ENCODE measurements at regions of chr17 and their contacts with region 1.

Region 1: GRCh38 chr17:52827526-52827925 is 669.0 kb upstream of the CA10 start:
- DNase-seq: no peak
- ATAC-seq: no peak
- H3K4me3 Mint-ChIP-seq: no peak overlapping the region
- H3K27ac Mint-ChIP-seq: no peak overlapping the region
- H3K4me1 Mint-ChIP-seq: no peaks in the 10 kb centered on the region
- H3K27me3 Mint-ChIP-seq: no peaks in the 10 kb centered on the region

Region 2: GRCh38 chr17:52482271-52482670 is 345.3 kb before region 1 on chr17:
- CTCF ChIA-PET with region 1: no interaction called
- POLR2A ChIA-PET with region 1: no interaction called
- intact Hi-C with region 1: no loop called
- DNase-seq: no peak
- ATAC-seq: no peak
- H3K4me3 Mint-ChIP-seq: no peak overlapping the region
- H3K27ac Mint-ChIP-seq: no peak overlapping the region
- H3K4me1 Mint-ChIP-seq: no peaks in the 10 kb centered on the region
- H3K27me3 Mint-ChIP-seq: no peaks in the 10 kb centered on the region

Region 3: GRCh38 chr17:52776234-52776633 is 51.3 kb before region 1 on chr17:
- CTCF ChIA-PET with region 1: no interaction called
- POLR2A ChIA-PET with region 1: no interaction called
- intact Hi-C with region 1: loop called in 1 of 2 experiments (anchors 5 kb)
- DNase-seq: no peak
- ATAC-seq: no peak
- H3K4me3 Mint-ChIP-seq: no peak overlapping the region
- H3K27ac Mint-ChIP-seq: no peak overlapping the region
- H3K4me1 Mint-ChIP-seq: no peaks in the 10 kb centered on the region
- H3K27me3 Mint-ChIP-seq: no peaks in the 10 kb centered on the region

Region 4: DNA sequence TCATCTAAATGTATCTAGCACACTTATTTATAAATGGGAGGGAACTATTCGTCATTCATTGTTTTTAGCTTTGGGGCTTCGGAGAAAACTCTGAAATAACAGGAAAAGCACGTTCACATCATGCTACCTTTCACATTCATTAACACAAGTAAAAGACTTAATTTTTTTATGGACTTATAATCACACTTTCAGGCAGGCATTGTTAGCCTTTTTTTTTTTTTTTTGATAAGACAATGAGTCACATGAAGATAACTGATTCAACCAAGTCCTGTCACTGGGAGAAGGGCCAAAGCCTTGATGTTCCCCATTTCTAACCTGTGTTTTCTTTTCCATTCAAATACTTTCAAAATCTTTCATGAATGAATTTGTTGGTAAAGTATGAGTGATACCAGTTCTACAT is 37.7 kb before region 1 on chr17:
- CTCF ChIA-PET with region 1: interaction called, 3 read pairs
- POLR2A ChIA-PET with region 1: no interaction called
- intact Hi-C with region 1: loop called in 1 of 2 experiments (anchors 5 kb)
- DNase-seq: no peak
- ATAC-seq: no peak
- H3K4me3 Mint-ChIP-seq: no peak overlapping the region
- H3K27ac Mint-ChIP-seq: no peak overlapping the region
- H3K4me1 Mint-ChIP-seq: no peaks in the 10 kb centered on the region
- H3K27me3 Mint-ChIP-seq: no peaks in the 10 kb centered on the region

Region 5: GRCh38 chr17:52885882-52886281 is 58.4 kb after region 1 on chr17:
- CTCF ChIA-PET with region 1: no interaction called
- POLR2A ChIA-PET with region 1: no interaction called
- intact Hi-C with region 1: no loop called
- DNase-seq: no peak
- ATAC-seq: no peak
- H3K4me3 Mint-ChIP-seq: no peak overlapping the region
- H3K27ac Mint-ChIP-seq: no peak overlapping the region
- H3K4me1 Mint-ChIP-seq: no peaks in the 10 kb centered on the region
- H3K27me3 Mint-ChIP-seq: no peaks in the 10 kb centered on the region

Region 6: GRCh38 chr17:52938623-52939230 is 111.2 kb after region 1 on chr17:
- CTCF ChIA-PET with region 1: no interaction called
- POLR2A ChIA-PET with region 1: no interaction called
- intact Hi-C with region 1: no loop called
- DNase-seq: no peak
- ATAC-seq: no peak
- H3K4me3 Mint-ChIP-seq: no peak overlapping the region
- H3K27ac Mint-ChIP-seq: no peak overlapping the region
- H3K4me1 Mint-ChIP-seq: no peaks in the 10 kb centered on the region
- H3K27me3 Mint-ChIP-seq: no peaks in the 10 kb centered on the region

Region 7: DNA sequence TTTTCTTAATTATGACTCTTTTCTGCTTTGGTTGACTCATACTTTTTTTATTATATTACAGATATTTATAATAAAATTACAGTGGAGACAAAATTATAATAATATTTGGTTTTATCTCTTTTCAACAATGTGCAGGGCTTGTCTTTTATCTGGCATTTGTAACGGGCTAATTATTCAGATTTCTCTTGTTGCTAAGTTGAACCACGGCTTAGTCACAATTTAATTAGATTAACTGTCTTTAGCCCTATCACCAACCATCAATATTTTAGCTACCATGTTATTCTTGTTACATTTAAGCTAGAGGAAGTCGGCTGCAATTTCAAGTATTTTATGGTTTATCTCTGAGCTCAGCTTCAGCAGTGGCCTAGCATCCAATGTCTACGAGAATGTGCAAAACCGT is 129.9 kb after region 1 on chr17:
- CTCF ChIA-PET with region 1: no interaction called
- POLR2A ChIA-PET with region 1: no interaction called
- intact Hi-C with region 1: no loop called
- DNase-seq: no peak
- ATAC-seq: no peak
- H3K4me3 Mint-ChIP-seq: no peak overlapping the region
- H3K27ac Mint-ChIP-seq: no peak overlapping the region
- H3K4me1 Mint-ChIP-seq: no peaks in the 10 kb centered on the region
- H3K27me3 Mint-ChIP-seq: no peaks in the 10 kb centered on the region

Measured in activated CD4-positive, alpha-beta T cell treated with anti-CD3 and anti-CD28 coated beads for 36 hours (primary cell).